ENCODE measurements at regions of chr9 and their contacts with region 1.

Region 1: DNA sequence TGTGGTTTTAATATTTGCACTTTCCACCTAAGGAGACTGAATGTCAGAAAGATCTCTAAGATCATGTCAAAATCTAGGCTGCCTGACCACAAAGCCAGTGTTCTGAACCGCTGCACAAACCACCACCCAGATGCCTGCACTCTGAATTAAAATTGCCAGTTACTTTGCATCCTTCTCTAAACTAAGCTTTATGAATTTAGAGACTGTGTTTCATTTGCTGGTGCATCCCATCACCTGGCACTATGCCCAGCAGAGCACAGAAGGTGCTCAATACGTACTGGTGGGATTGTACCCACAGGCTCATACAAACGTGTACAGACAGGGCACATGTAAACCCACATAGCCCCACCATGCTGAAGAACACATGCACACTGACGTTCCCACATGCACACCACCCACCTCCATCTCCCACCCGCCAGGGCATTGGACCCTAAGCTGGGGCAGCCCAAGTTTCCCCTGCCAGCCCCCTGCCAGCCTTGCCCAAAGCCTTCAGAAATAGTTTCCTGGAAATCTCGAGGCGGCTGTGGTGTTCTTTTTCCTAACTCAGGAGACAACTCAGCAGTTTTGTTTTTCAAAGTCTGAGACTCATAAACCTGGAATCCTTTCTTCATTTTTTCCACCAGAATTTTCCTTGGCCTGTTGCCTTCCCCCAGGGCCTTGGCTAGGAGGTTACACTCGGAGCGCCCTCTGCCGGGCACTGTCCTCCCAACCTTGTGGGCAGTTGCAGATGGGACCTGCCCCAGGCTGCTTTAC is 9.6 kb upstream of the TRAF1 start:
- DNase-seq: peak; percentile 76 to 80
- ATAC-seq: peak; percentile 80 to 83
- H3K4me3 ChIP-seq: no peak overlapping the region
- H3K27ac ChIP-seq: peak overlapping the region; percentile 53 to 72 (median 60)
- H3K4me1 ChIP-seq: peaks cover 22 to 23% of the 10 kb centered on the region in 2 donors
- H3K27me3 ChIP-seq: no peaks in the 10 kb centered on the region
- CTCF ChIP-seq: peak; percentile 78 to 88 (median 79)
- POLR2A ChIP-seq: no peak

Region 2: GRCh38 chr9:120755827-120756434 is 180.3 kb before region 1 on chr9:
- in situ Hi-C with region 1: loop called (anchors 5 to 25 kb)
- intact Hi-C with region 1: loop called (anchors 1 kb)
- DNase-seq: peak; percentile 17 to 34
- ATAC-seq: peak; percentile 56 to 74
- H3K4me3 ChIP-seq: no peak overlapping the region
- H3K27ac ChIP-seq: no peak overlapping the region
- H3K4me1 ChIP-seq: peaks cover 0 to 3% of the 10 kb centered on the region in 2 donors
- H3K27me3 ChIP-seq: no peaks in the 10 kb centered on the region
- CTCF ChIP-seq: peak; percentile 74 to 86 (median 86)
- POLR2A ChIP-seq: no peak

Region 3: GRCh38 chr9:120787933-120788332 is 148.3 kb before region 1 on chr9:
- in situ Hi-C with region 1: no loop called
- intact Hi-C with region 1: loop called (anchors 2 kb)
- DNase-seq: no peak
- ATAC-seq: no peak
- H3K4me3 ChIP-seq: no peak overlapping the region
- H3K27ac ChIP-seq: peak overlapping the region in 2 of 4 donors; percentile 10 to 61
- H3K4me1 ChIP-seq: peaks cover 35 to 38% of the 10 kb centered on the region in 2 donors
- H3K27me3 ChIP-seq: no peaks in the 10 kb centered on the region
- CTCF ChIP-seq: no peak
- POLR2A ChIP-seq: no peak

Region 4: DNA sequence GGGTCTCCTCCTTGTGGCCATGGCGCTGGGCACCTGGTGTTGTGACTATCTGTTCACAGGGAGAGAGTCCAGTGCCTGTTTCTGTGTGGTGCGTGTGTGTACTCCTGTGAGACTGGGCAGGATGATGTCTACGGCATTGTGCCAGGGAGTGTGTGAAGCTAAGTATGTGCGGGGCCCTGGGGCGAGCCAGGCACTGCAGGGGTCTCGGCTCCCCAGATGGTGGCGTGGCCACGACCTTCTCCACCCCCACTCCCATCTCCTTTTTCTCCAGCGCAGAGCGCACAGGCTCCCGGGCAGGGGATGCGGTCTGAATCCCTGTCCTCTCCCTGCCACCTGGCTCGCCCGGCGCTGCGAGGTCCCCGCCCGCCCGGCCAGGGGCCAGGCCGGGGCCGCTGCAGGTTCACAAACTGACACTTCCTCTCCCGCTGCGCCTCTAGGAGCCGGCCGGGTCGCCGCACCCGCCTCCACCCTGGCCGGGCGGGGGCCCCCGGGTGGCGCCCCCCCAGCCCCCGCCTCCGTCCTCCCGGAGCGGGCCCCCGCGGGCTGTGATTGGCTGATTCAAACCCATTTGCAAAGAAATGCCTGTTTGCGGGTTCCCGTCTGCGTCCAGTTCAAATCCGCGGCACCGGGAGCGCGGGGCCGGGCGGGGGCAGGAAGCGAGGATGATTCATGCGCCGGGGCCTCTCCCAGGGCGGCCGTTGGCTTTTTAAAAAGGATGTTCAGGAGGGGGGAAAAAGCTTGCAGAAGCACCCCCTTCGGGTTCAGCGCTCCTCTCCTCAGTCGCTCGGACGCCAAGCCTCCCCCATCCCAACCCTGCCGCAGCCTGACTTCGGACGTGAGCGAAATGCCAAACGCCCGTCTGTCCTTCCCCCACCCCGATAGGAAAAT is 60.0 kb before region 1 on chr9:
- in situ Hi-C with region 1: loop called (anchors 5 to 10 kb)
- intact Hi-C with region 1: loop called (anchors 2 kb)
- DNase-seq: peak; percentile 50 to 63
- ATAC-seq: peak; percentile 65 to 74
- H3K4me3 ChIP-seq: peak overlapping the region; percentile 77 to 81 (median 79)
- H3K27ac ChIP-seq: peak overlapping the region; percentile 74 to 87 (median 82)
- H3K4me1 ChIP-seq: peaks cover 6 to 9% of the 10 kb centered on the region in 2 donors
- H3K27me3 ChIP-seq: peaks cover 0 to 9% (median 6%) of the 10 kb centered on the region in 3 donors
- CTCF ChIP-seq: no peak
- POLR2A ChIP-seq: peak; percentile 12 to 30

Measured in gastrocnemius medialis (tissue), 4 donors.